ENCODE measurements at regions of chr4 and their contacts with region 1.

Region 1: DNA sequence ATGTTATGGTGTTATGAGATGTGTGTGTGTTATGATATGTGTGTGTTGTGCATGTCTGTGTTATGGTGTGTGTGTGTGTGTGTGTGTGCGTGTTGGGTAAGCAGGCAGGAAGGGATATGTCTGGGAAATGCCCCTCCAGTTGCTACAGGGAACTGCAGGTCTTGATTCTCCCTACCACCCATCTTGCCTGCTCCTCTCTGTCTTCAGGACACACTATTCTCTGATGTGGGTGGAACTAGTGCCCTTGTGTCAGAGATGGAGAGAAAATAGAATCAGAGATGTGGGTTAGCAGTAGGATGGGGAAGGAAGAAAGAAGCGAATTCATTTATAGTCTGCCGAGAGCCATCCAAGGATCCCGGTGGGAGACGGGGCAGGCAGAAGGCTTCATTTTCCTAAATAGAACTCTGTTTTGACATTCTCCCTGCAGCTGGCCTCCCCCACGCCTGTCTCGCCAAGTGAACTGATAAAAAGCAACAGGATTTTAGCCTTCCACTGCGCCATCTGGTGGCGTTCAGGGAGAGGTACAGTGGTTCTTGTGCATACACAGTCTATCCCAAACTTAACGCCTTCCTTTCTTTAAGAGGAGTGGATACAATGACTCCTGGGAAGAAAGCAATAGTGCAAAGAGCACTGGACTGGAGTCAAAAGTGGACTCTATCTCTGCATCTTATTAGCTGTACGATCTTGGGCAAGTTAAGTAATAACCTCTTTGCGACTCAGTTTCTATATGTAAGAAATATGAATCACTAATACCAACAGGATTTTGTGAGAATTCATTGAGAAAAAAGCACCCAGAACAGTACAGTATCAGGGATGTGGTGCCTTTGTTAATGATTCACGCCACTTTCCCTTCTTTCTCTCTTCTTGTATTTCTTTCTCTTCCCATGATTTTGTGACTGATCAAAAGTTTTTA is 14.1 kb upstream of the MGST2 start:
- DNase-seq: peak; percentile 91
- ATAC-seq: peak; percentile 94

Region 2: DNA sequence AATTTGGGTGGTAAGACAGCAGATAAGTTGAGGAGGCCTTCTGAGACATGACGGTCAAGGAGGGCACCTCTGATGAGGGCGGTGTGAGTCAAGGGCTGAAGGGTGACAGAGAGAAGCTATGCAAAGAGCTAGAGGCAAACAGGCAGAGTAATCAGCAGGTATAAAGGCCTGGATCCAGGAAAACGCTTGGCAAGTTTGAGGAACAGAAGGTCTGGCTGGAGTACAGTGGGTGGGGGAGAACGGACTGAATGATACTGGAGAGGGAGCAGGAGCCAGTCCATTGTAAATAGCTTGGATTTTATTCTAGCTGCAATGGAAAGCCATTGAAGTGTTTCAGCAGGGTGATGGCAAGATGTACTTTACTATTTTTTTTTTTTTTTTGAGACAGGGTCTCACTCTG is 158.4 kb before region 1 on chr4:
- intact Hi-C with region 1: loop called (anchors 10 kb)
- DNase-seq: no peak
- ATAC-seq: no peak